HEK293T (cell line): ENCODE measurements at regions of chr1 and their contacts with region 1.

Region 1: GRCh38 chr1:55140546-55140983 is 74.6 kb downstream of the USP24 start:
- DNase-seq: peak; percentile 86

Region 2: GRCh38 chr1:55172272-55172671 is 31.7 kb after region 1 on chr1:
- CTCF ChIA-PET with region 1: interaction called, 10 read pairs
- POLR2A ChIA-PET with region 1: no interaction called
- DNase-seq: no peak

Region 3: GRCh38 chr1:55209247-55209646 is 68.7 kb after region 1 on chr1:
- CTCF ChIA-PET with region 1: interaction called, 10 read pairs
- POLR2A ChIA-PET with region 1: no interaction called
- DNase-seq: peak; percentile 53

Region 4: GRCh38 chr1:55277377-55278130 is 137.0 kb after region 1 on chr1:
- CTCF ChIA-PET with region 1: interaction called, 12 read pairs
- POLR2A ChIA-PET with region 1: no interaction called
- DNase-seq: peak; percentile 93